PC-9 (cell line): ENCODE measurements at regions of chr5 and their contacts with region 1.

Region 1: GRCh38 chr5:115170929-115171510 is 1.3 kb upstream of the TRIM36 start:
- DNase-seq: no peak
- H3K4me3 ChIP-seq: peak overlapping the region; percentile 81; the same call in 1 of the 2 replicates
- H3K27ac ChIP-seq: no peak overlapping the region
- H3K4me1 ChIP-seq: no peaks in the 10 kb centered on the region
- H3K27me3 ChIP-seq: peaks cover 5% of the 10 kb centered on the region; the same call in 1 of the 2 replicates
- CTCF ChIP-seq: no peak

Region 2: GRCh38 chr5:115184780-115185179 is 13.8 kb after region 1 on chr5:
- CTCF ChIA-PET with region 1: interaction called, 15 read pairs
- POLR2A ChIA-PET with region 1: no interaction called
- intact Hi-C with region 1: no loop called
- DNase-seq: no peak
- H3K4me3 ChIP-seq: no peak overlapping the region
- H3K27ac ChIP-seq: no peak overlapping the region
- H3K4me1 ChIP-seq: no peaks in the 10 kb centered on the region
- H3K27me3 ChIP-seq: no peaks in the 10 kb centered on the region
- CTCF ChIP-seq: no peak